Sigmoid colon (tissue), 7 donors: ENCODE measurements at regions of chr3 and their contacts with region 1.

Region 1: DNA sequence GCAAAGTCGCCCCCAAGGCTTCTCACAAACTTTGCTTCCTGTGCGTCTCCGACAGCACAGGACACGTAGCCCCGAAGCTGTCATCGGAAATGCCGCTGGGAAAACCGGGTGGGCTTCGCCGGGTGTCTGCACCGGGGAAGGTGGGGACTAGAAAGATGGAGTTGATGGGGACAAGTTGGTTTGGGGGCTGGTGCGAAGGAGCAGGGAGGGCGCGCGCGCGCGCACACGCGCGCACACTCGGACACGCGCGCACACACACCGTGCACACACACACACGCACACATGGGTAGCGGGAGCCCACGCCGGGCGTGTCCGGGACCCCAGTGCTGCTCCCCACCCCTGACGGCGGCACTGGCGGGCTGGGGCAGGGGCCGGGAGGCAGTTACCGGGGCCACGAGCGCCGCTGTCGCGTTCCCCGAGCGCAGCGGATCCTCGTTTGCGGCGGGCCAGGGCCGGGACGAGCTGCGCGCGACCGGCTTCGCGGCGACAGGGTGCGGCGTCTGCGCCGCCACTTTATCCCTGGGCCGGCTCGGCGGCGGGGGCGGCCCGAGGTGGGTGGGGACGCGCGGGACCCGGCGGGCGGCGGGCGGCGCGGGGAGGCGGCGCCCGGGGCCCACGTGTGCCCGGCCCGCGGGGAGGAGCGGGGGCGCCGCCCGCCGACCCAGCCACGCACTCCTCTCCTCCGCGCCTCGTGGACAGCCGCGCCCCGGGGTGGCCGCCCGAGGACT is 547 bp upstream of the MGLL start:
- DNase-seq: peak; percentile 89
- H3K4me3 ChIP-seq: peak overlapping the region; percentile 82 to 95 (median 92)
- H3K27ac ChIP-seq: peak overlapping the region; percentile 88 to 94 (median 89)
- H3K4me1 ChIP-seq: peaks cover 0 to 39% (median 32%) of the 10 kb centered on the region in 4 donors
- H3K27me3 ChIP-seq: no peaks in the 10 kb centered on the region
- CTCF ChIP-seq: peak in 1 of 4 experiments; percentile 32
- EP300 ChIP-seq: no peak
- POLR2A ChIP-seq: no peak

Region 2: DNA sequence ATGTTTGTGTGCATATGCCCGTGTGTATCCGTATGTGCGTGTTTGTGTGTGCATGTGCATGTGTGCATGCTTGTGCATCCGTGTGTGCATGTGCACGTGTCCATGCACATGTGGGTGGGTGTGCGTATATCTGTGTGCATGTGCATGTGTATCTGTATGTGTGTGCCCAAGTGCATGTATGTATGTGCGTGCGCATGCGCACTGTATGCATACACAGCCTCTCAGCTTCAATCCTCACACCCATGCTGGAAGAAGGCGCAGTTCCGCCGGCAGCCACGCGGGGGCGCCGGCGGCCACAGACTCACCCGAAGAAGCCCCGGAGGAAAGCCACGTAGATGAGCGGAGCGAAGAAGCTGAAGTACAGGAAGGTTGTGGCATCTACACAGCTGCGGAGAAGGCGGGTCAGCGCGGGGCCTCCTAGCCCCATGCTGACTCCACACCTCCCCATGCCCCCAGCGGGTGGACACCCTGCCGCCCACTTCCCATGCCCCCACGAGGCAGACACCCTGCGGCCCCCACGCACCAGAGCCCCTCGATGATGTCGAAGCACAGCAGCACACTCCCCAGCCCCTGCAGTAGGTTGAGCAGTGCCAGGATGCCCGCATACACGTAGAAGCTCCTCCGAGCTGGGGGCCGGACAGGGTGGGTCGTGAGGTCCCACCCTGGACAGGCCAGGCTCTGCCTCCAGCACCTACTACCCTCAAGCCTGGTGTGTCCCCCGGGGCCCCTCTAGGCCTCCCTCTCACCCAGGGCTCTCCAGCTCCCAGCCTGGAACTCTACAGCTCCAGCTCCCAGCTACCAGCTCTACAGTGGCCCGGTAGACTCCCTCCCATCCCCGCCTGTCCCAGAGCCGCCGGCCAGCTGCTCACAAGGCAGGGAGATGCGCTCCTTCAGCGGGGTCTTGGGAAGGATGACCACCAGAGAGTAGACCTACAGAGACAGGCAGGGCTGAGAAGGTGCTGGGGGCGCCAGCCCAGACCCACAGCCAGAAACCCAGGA is 247.7 kb before region 1 on chr3:
- intact Hi-C with region 1: loop called (anchors 2 kb)
- DNase-seq: peak; percentile 91
- H3K4me3 ChIP-seq: no peak overlapping the region
- H3K27ac ChIP-seq: peak overlapping the region in 3 of 4 donors; percentile 7 to 43 (median 33)
- H3K4me1 ChIP-seq: peaks cover 0 to 11% (median 8%) of the 10 kb centered on the region in 4 donors
- H3K27me3 ChIP-seq: no peaks in the 10 kb centered on the region
- CTCF ChIP-seq: peak; percentile 88 to 99 (median 92)
- EP300 ChIP-seq: no peak
- POLR2A ChIP-seq: no peak

Region 3: GRCh38 chr3:127598841-127599570 is 223.9 kb before region 1 on chr3:
- intact Hi-C with region 1: loop called (anchors 5 kb)
- DNase-seq: no peak
- H3K4me3 ChIP-seq: peak overlapping the region in 3 of 4 donors; percentile 53 to 63 (median 60)
- H3K27ac ChIP-seq: peak overlapping the region; percentile 59 to 79 (median 69)
- H3K4me1 ChIP-seq: peaks cover 0 to 16% (median 11%) of the 10 kb centered on the region in 4 donors
- H3K27me3 ChIP-seq: no peaks in the 10 kb centered on the region
- CTCF ChIP-seq: no peak
- EP300 ChIP-seq: no peak
- POLR2A ChIP-seq: no peak

Region 4: DNA sequence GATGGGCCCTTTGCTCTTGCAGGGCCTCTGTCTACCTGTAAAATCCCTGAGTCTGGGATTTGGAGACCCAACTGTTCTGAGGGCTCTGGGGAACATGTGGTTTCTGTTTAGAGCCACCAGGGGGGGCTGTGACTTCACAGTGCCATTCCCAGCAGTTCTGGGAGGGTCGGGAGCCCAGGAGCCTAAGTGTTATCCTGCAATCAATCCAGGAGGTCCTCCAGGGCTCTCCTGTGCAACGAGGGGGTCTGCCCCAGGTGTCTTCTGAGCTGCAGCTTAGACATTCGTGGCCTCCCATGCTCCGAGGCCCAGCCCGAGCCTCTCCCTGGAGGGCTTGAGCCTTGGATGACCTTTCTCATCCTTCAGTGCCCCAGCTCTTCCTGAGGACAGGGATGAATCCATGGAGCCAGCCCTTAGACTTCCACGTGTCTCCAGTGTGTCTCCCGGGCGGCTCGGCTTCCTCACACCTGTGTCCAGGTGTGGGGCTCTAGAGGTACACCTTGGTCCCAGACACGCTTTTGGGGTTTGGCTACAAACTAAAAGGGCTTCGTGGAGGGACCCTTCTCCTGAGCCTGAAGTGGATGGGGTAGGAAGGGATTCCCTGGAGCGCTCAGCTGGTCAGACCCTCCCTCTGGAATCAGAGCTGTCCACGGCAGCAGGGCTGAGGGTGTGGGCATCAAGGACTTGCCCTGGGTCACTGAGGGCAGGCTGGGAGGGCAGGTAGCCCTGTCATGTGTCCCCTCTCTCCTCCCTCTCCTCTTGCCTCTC is 170.4 kb before region 1 on chr3:
- intact Hi-C with region 1: loop called (anchors 1 kb)
- DNase-seq: peak; percentile 77
- H3K4me3 ChIP-seq: no peak overlapping the region
- H3K27ac ChIP-seq: no peak overlapping the region
- H3K4me1 ChIP-seq: peaks cover 0 to 15% (median 2%) of the 10 kb centered on the region in 4 donors
- H3K27me3 ChIP-seq: no peaks in the 10 kb centered on the region
- CTCF ChIP-seq: peak; percentile 70 to 94 (median 80)
- EP300 ChIP-seq: no peak
- POLR2A ChIP-seq: no peak

Region 5: DNA sequence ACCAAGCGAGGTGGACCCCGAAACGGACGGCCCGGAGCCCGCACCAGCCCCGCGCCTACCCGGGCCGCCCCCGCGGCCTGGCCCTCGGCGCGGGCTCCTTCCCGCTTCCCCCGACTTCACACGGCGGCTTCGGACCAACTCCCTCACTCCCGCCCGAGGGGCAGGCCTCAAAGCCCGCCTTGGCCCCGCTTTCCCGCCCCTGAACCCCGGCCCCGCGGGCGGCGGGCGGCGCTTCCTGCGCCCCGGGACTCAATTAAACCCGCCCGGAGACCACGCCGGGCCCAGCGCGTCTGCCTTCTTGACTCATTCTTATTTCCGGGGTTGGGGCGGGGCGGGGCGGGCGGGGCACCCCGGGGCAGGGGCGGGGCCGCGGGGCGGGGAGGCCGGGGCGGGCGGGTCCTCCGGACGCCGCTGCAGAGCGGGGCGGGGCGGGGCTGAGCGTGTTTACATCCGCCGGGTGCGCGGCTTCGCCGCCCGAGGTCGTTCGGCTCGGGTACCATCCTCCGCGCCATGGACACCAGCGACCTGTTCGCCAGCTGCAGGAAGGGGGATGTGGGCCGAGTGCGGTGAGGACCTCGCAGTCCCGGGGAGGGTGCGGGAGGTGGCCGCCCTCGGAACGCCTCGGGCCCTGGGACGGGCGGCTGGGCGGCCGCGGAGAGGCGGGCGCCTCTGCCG is 150.2 kb before region 1 on chr3 and contains the start of gene ABTB1:
- intact Hi-C with region 1: loop called (anchors 5 kb)
- DNase-seq: peak; percentile 92
- H3K4me3 ChIP-seq: peak within 1 kb of the TSS; percentile 81 to 100 (median 90)
- H3K27ac ChIP-seq: peak within 1 kb of the TSS; percentile 89 to 93 (median 92)
- H3K4me1 ChIP-seq: peaks cover 0 to 34% (median 27%) of the 10 kb centered on the region in 4 donors
- H3K27me3 ChIP-seq: no peaks in the 10 kb centered on the region
- CTCF ChIP-seq: no peak
- EP300 ChIP-seq: no peak
- POLR2A ChIP-seq: no peak
- total RNA-seq, gene ABTB1: 33.5 to 75.3 (median 49.1) TPM

Region 6: GRCh38 chr3:127690823-127691452 is 131.9 kb before region 1 on chr3:
- intact Hi-C with region 1: loop called (anchors 2 kb)
- DNase-seq: no peak
- H3K4me3 ChIP-seq: no peak overlapping the region
- H3K27ac ChIP-seq: peak overlapping the region; percentile 74 to 86 (median 82)
- H3K4me1 ChIP-seq: peaks cover 0 to 40% (median 37%) of the 10 kb centered on the region in 4 donors
- H3K27me3 ChIP-seq: no peaks in the 10 kb centered on the region
- CTCF ChIP-seq: peak; percentile 44 to 63 (median 59)
- EP300 ChIP-seq: no peak
- POLR2A ChIP-seq: no peak

Region 7: GRCh38 chr3:127786353-127787070 is 36.4 kb before region 1 on chr3:
- intact Hi-C with region 1: loop called (anchors 2 kb)
- DNase-seq: peak; percentile 98
- H3K4me3 ChIP-seq: peak overlapping the region in 3 of 4 donors; percentile 13 to 27 (median 20)
- H3K27ac ChIP-seq: peak overlapping the region; percentile 87 to 95 (median 94)
- H3K4me1 ChIP-seq: peaks cover 0 to 92% (median 77%) of the 10 kb centered on the region in 4 donors
- H3K27me3 ChIP-seq: no peaks in the 10 kb centered on the region
- CTCF ChIP-seq: no peak
- EP300 ChIP-seq: peak in 2 of 4 donors; percentile 36 to 59
- POLR2A ChIP-seq: no peak